Psoas muscle (tissue), 8 donors: ENCODE measurements at regions of chr1 and their contacts with region 1.

Region 1: GRCh38 chr1:6646499-6647148 is 22.0 kb downstream of the THAP3 start:
- DNase-seq: no peak
- ATAC-seq: peak; percentile 60 to 76 (median 68)
- H3K4me3 ChIP-seq: no peak overlapping the region
- H3K27ac ChIP-seq: no peak overlapping the region
- H3K4me1 ChIP-seq: no peaks in the 10 kb centered on the region
- H3K27me3 ChIP-seq: no peaks in the 10 kb centered on the region
- CTCF ChIP-seq: peak; percentile 62

Region 2: DNA sequence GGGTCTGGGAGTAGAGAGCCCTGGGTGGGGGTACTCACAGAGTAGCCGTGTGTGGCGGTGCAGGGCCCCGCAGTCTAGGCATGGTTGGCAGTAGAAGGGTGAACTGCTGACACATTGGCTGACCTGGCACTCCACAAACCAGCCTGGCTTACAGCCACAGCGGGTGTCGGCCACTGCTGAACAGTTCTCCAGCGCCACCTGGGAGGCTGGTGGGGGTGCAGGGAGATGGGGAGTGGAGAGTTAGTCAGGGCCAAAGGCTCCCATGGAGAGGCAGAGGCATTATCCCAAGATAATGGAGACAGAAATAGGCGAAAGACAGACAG is 182.1 kb before region 1 on chr1:
- intact Hi-C with region 1: no loop called
- DNase-seq: no peak
- ATAC-seq: peak in 3 of 4 donors; percentile 32 to 48 (median 46)
- H3K4me3 ChIP-seq: no peak overlapping the region
- H3K27ac ChIP-seq: no peak overlapping the region
- H3K4me1 ChIP-seq: no peaks in the 10 kb centered on the region
- H3K27me3 ChIP-seq: peaks cover 0 to 49% (median 11%) of the 10 kb centered on the region in 3 donors
- CTCF ChIP-seq: no peak

Region 3: DNA sequence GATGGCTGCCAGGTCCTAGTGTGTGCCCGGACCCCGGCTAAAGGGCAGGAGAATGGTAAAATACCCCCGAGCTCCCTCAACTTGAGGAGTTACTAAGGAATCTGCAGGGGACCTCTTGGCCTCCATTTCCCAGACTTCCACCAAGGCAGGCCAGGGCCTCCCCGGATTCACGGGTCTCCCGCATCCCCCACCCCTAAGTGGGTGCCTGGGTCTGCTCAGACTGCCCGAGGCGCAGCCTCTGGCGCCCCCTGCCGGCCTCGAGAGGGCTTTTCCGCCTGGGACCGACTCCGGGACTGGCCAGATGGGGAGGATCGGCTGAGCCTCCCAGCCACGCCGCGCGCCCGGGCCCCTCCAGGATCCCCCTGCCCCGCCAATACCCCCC is 156.8 kb before region 1 on chr1:
- intact Hi-C with region 1: loop called (anchors 2 to 5 kb)
- DNase-seq: peak; percentile 70 to 80
- ATAC-seq: peak; percentile 61 to 79 (median 70)
- H3K4me3 ChIP-seq: peak overlapping the region; percentile 64
- H3K27ac ChIP-seq: no peak overlapping the region
- H3K4me1 ChIP-seq: peaks cover 7% of the 10 kb centered on the region
- H3K27me3 ChIP-seq: peaks cover 0 to 27% (median 4%) of the 10 kb centered on the region in 3 donors
- CTCF ChIP-seq: peak; percentile 78

Region 4: DNA sequence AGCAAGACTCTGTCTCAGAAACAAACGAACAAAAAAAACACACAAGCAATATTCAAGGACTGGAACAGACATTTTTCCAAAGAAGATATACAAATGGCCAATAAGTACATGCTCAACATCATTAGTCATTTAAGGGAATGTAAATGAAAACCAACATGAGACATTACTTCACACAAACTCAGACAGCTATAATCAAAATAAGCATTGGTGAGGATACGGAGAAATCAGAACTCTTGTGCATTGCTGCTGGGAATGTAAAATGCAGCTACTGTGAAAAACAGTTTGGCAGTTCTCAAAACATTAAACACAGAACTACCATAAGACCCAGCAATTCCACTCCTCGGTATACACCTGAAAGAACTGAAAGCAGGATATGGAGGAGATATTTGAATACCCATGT is 107.7 kb before region 1 on chr1:
- intact Hi-C with region 1: no loop called
- DNase-seq: no peak
- ATAC-seq: no peak
- H3K4me3 ChIP-seq: no peak overlapping the region
- H3K27ac ChIP-seq: no peak overlapping the region
- H3K4me1 ChIP-seq: no peaks in the 10 kb centered on the region
- H3K27me3 ChIP-seq: no peaks in the 10 kb centered on the region
- CTCF ChIP-seq: no peak

Region 5: GRCh38 chr1:6554031-6554906 is 92.4 kb before region 1 on chr1 and contains the start of gene NOL9:
- intact Hi-C with region 1: loop called in 1 of 2 experiments (anchors 5 kb)
- DNase-seq: peak; percentile 96 to 98
- ATAC-seq: peak; percentile 96 to 98 (median 98)
- H3K4me3 ChIP-seq: peak within 1 kb of the TSS; percentile 99
- H3K27ac ChIP-seq: peak within 1 kb of the TSS; percentile 91
- H3K4me1 ChIP-seq: peaks cover 20% of the 10 kb centered on the region
- H3K27me3 ChIP-seq: no peaks in the 10 kb centered on the region
- CTCF ChIP-seq: peak; percentile 94
- total RNA-seq, gene NOL9: 17.1 to 26.1 (median 22.8) TPM